ENCODE measurements at regions of chr11 and their contacts with region 1.

Region 1: DNA sequence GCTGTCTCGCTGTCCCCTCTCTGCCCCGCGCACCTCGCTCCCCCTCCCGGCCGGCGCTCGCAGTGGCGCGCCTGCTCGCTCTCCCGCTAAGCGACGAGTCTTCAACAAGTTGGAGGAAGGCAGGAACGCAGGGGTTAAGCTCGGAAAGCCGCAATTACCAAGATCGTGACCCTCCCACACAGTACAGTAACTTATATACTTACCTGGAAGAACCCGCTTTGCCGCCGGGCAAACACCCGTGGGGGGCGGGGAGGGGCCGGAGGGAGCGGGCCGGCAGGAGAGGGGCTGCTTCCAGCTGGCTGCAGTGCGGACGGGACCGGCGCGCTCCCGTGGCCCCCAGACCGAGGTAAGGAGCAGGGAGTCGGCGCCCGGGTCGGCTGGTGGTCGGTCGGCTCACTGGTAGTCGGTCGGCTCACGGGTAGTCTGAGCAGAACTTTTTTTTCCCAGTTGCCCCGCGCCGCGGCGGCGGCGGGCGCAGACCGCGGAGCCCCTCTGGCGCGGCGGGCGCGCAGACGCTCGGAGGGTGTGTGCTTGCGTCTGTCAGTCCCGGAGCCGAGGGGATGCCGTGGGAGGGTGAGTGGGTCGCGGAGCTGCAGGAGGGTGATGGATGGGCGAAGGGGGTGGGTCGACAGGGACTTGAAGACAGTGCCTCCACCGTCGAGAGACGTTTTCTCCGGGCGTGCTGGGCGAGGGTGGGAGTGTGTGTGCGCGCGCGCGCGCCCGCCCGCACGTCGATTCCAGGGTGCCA is 101.2 kb upstream of the HSD17B12 start:
- DNase-seq: no peak
- ATAC-seq: peak; percentile 79
- H3K4me3 ChIP-seq: peak overlapping the region; percentile 57 to 67
- H3K27ac ChIP-seq: no peak overlapping the region
- H3K4me1 ChIP-seq: peaks cover 32% of the 10 kb centered on the region
- H3K27me3 ChIP-seq: peaks cover 53% of the 10 kb centered on the region
- CTCF ChIP-seq: peak; percentile 68

Region 2: DNA sequence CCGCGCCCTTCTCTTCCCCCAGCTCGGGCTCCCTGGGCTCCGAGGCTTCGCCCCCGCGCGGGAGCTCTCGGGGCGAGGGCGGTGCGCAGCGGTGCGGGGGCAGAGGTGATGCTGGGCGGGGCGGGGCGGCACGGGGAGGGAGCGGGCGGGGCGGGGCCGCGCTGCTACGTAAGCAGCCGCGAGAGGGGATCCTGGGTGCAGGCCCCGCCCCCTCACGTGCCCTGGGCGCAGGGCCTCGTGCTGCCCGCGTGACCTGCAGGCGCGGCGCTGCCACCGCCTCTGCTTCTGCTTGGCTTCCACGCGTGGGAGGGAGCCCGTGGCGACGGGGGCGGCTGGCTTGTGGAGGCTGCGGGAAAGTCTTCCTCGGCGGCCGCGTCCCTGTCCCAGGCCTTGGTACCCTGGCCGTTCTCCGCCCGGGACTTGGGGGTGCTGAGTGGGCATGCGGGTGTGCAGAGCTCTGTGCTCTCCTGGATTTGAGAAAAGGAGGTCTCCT is 31.4 kb before region 1 on chr11:
- CTCF ChIA-PET with region 1: no interaction called
- POLR2A ChIA-PET with region 1: no interaction called
- in situ Hi-C with region 1: no loop called
- intact Hi-C with region 1: no loop called
- DNase-seq: no peak
- ATAC-seq: peak; percentile 43
- H3K4me3 ChIP-seq: no peak overlapping the region; a peak in 1 of 4 replicates
- H3K27ac ChIP-seq: no peak overlapping the region
- H3K4me1 ChIP-seq: peaks cover 3% of the 10 kb centered on the region; the same call in 1 of the 2 replicates
- H3K27me3 ChIP-seq: peaks cover 5% of the 10 kb centered on the region; the same call in 1 of the 2 replicates
- CTCF ChIP-seq: no peak

Region 3: GRCh38 chr11:43810929-43811596 is 231.7 kb after region 1 on chr11:
- CTCF ChIA-PET with region 1: no interaction called
- POLR2A ChIA-PET with region 1: no interaction called
- in situ Hi-C with region 1: no loop called
- intact Hi-C with region 1: loop called (anchors 5 kb)
- DNase-seq: no peak
- ATAC-seq: no peak
- H3K4me3 ChIP-seq: no peak overlapping the region
- H3K27ac ChIP-seq: no peak overlapping the region
- H3K4me1 ChIP-seq: no peaks in the 10 kb centered on the region
- H3K27me3 ChIP-seq: no peaks in the 10 kb centered on the region
- CTCF ChIP-seq: peak; percentile 67; the same call in 1 of the 2 replicates

Measured in Panc1 (cell line).